ENCODE measurements at regions of chr11 and their contacts with region 1.

Region 1: GRCh38 chr11:124898711-124899110 is 1.0 kb upstream of the ROBO4 start:
- DNase-seq: no peak
- ATAC-seq: peak; percentile 48 to 61
- H3K4me3 ChIP-seq: peak overlapping the region in 1 of 4 donors; percentile 56
- H3K27ac ChIP-seq: peak overlapping the region; percentile 55 to 80 (median 73)
- H3K4me1 ChIP-seq: peaks cover 4 to 17% of the 10 kb centered on the region in 2 donors
- H3K27me3 ChIP-seq: no peaks in the 10 kb centered on the region
- CTCF ChIP-seq: no peak
- POLR2A ChIP-seq: no peak

Region 2: GRCh38 chr11:124875943-124876817 is 22.5 kb before region 1 on chr11:
- in situ Hi-C with region 1: no loop called
- intact Hi-C with region 1: loop called (anchors 2 kb)
- DNase-seq: peak; percentile 54 to 70
- ATAC-seq: peak; percentile 91
- H3K4me3 ChIP-seq: peak overlapping the region; percentile 60 to 93 (median 64)
- H3K27ac ChIP-seq: peak overlapping the region; percentile 72 to 88 (median 76)
- H3K4me1 ChIP-seq: peaks cover 0 to 13% of the 10 kb centered on the region in 2 donors
- H3K27me3 ChIP-seq: peaks cover 13 to 30% (median 22%) of the 10 kb centered on the region in 3 donors
- CTCF ChIP-seq: peak; percentile 43 to 71 (median 62)
- POLR2A ChIP-seq: peak; percentile 11 to 26

Region 3: DNA sequence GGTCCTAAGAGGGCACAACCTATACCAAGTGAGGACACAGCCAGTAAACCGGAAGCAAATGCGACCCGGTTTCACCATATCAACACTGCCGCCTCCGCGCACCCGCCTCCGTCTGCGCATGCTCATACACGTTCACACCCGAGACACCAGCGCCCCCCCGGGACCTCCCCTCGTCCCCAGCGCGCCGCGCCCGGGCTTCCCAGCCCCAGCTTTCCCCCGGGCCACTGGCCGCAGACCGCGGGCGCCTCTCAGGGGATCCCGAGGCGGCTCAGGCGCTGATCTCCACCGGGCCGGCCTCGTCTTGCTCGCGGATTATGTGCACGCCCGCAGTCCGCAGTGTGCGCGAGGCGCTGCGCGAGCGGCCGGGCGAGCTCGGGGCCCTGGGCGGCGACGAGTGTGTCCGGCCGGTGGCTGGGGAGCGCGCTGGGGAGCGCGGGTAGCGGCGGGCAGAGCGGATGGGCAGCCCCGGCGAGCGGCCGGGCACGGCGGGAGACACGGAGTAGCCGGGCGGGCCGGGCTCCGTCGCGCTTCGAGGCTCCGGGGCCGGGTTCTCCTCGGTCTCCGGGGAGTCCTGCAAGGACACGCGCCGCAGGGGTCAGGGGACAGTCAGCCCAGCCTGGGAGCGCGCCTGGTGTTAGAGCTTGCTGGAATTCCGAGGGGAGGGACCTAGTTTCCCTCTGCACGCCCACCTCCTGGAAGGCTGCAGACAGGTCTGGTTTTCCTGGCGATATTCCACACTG is 22.3 kb after region 1 on chr11:
- in situ Hi-C with region 1: no loop called
- intact Hi-C with region 1: loop called (anchors 2 kb)
- DNase-seq: peak in 1 of 2 donors; percentile 45
- ATAC-seq: peak; percentile 60 to 68
- H3K4me3 ChIP-seq: peak overlapping the region; percentile 46 to 74 (median 58)
- H3K27ac ChIP-seq: peak overlapping the region; percentile 6 to 67 (median 54)
- H3K4me1 ChIP-seq: no peaks in the 10 kb centered on the region
- H3K27me3 ChIP-seq: peaks cover 0 to 11% (median 9%) of the 10 kb centered on the region in 3 donors
- CTCF ChIP-seq: no peak
- POLR2A ChIP-seq: no peak